ENCODE measurements at regions of chr17 and their contacts with region 1.

Region 1: DNA sequence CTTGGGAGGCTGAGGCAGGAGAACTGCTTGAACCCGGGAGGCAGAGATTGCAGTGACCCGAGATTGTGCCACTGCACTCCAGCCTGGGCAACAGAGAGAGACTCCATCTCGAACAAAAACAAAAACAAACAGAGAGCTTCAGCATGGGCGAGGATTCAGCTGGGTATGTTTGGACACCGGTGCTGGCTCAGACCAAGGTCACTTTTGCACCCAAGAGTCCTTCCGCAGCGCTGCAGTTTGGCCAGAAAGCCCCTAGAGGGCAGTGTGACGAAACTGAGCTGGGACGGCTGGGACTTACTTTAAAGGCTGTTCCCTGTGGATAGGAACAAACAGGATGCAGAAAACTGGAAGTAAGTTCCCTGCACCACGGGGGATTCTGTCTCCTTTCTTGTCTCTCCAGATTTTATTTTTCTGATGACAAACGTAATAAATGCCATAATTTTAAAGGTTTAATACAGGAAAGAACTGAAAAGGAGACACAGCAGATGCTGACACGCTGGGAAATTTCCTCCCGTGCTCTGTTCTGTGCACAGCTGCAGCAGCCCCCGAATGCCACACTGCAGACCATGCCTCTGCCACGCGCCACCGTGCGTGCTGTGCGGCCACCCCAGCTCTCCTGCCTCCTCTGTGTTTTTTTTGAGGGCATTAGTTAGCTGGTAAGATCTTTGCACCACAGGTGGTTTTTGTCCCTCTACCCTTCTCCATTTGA is 25.2 kb upstream of the USP36 start:
- DNase-seq: peak; percentile 82
- CTCF ChIP-seq: peak; percentile 93

Region 2: GRCh38 chr17:78962345-78962983 is 96.6 kb after region 1 on chr17:
- in situ Hi-C with region 1: loop called (anchors 10 kb)
- DNase-seq: no peak
- CTCF ChIP-seq: no peak

Region 3: DNA sequence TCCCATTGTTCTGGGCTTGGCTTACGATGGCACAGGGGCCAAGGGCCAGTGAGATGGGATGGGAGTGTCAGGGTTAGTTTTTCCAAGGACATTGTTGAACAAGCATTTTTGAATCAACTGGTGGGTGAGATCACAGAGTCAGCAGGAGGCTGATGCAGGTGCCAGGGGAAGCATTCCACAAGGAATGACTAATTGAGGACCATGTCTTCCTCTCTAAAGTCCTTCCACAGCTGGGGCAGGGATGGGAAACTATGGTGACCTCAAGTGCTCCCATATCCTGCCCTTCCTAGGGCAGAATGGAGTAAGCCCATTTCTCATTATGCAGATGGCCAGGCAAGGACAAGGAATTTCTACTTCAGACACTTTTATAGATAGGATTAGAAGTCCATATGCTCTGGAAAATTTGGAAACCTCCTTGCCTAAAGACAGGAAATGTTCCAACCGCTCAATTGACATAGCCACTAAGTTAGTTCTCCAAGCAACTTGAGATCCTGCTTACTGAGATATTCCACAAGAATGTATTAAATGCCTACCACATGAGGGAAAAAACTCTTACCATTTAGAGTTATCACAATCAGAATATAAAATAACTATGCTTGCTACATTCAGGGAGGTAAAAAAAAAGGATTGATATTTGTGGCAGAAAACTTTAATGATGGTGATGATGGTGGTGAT is 187.6 kb after region 1 on chr17:
- in situ Hi-C with region 1: no loop called
- DNase-seq: no peak
- CTCF ChIP-seq: no peak